ENCODE measurements at regions of chr16 and their contacts with region 1.

Region 1: GRCh38 chr16:1705688-1706385 is at the start of gene MAPK8IP3:
- DNase-seq: peak; percentile 92
- H3K4me3 ChIP-seq: peak within 1 kb of the TSS; percentile 83
- H3K27ac ChIP-seq: peak within 1 kb of the TSS; percentile 57
- H3K4me1 ChIP-seq: peaks cover 30% of the 10 kb centered on the region
- CTCF ChIP-seq: peak; percentile 81
- total RNA-seq, gene MAPK8IP3: 95.9 and 114 TPM in 2 replicates

Region 2: DNA sequence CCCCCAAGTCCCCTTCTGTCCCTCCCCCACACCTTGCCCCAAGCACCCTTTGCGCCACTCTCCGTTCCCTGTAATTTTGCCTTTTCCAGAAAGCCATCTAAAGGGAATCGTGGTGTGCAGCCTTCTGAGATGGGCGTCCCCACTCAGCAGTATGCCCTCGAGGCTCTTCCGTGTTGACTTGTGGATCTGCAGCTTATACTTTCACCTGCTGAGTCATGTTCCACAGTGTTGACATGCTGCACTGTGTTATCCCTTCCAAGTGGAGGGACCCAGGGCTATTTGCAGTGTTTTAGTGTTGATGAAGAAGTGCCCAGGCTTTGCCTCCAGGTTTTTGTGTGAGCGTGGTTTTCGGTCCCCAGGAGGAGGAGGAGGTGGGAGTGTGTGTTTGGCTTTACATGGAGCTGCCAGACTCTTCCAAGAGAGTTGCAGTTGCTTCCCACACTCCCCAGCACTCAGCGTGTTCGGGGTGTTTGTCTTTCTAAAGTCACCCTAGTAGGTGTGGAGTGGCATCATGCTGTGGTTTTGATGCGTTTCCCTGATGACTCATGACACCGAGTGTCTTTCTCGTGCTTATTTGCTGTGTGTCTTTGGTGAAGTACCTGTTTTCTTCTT is 59.8 kb before region 1 on chr16:
- CTCF ChIA-PET with region 1: no interaction called
- POLR2A ChIA-PET with region 1: no interaction called
- intact Hi-C with region 1: no loop called
- DNase-seq: no peak
- H3K4me3 ChIP-seq: no peak overlapping the region
- H3K27ac ChIP-seq: peak overlapping the region; percentile 75
- H3K4me1 ChIP-seq: peaks cover 19% of the 10 kb centered on the region
- CTCF ChIP-seq: no peak

Region 3: GRCh38 chr16:1667251-1667650 is 38.6 kb before region 1 on chr16:
- CTCF ChIA-PET with region 1: no interaction called
- POLR2A ChIA-PET with region 1: no interaction called
- intact Hi-C with region 1: no loop called
- DNase-seq: no peak
- H3K4me3 ChIP-seq: no peak overlapping the region
- H3K27ac ChIP-seq: no peak overlapping the region
- H3K4me1 ChIP-seq: no peaks in the 10 kb centered on the region
- CTCF ChIP-seq: no peak

Region 4: DNA sequence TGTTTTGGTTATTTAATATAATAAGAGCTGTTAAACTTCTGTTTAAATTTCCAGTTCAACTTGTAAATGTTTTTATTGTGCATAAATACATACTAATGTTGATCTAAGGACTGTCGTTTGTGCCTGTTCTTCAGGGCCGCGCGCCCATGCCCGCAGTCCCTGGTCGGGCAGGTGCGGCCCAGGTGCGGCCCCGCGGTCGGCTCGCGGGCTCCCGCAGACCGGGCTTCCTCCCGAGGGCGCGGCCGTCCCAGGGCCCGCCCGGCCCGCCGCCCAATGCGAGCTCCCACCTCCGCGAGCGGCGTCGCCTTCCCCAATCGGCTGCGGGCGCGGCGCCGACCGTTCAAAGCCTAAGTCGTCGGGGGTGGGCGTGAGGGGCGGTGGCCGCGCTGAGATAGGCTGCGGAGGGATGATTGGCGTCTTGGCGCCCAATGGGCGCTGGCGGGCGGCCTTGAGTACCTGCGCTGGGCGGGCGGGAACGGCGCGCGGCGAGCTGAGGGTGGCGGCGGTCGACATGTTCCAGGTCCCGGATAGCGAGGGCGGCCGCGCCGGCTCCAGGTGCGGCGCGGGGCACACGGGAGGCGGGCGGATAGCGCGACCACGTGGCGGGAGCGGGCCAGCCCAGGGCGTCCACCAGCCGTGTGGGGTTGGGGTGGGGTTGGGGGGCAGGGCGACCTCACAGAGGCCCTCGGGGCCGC is 27.9 kb before region 1 on chr16 and contains the start of gene JPT2:
- CTCF ChIA-PET with region 1: interaction called, 3 read pairs
- POLR2A ChIA-PET with region 1: interaction called, 12 read pairs
- intact Hi-C with region 1: loop called (anchors 1 kb)
- DNase-seq: peak; percentile 98
- H3K4me3 ChIP-seq: peak within 1 kb of the TSS; percentile 97
- H3K27ac ChIP-seq: peak within 1 kb of the TSS; percentile 57
- H3K4me1 ChIP-seq: peaks cover 22% of the 10 kb centered on the region
- CTCF ChIP-seq: no peak
- total RNA-seq, gene JPT2: 48.3 and 67.4 TPM in 2 replicates

Region 5: GRCh38 chr16:1772736-1773584 is 67.1 kb after region 1 on chr16 and contains the starts of genes EME2 and MRPS34:
- CTCF ChIA-PET with region 1: no interaction called
- POLR2A ChIA-PET with region 1: no interaction called
- intact Hi-C with region 1: loop called (anchors 2 kb)
- DNase-seq: peak; percentile 92
- H3K4me3 ChIP-seq: peak within 1 kb of the TSS; percentile 98
- H3K27ac ChIP-seq: peak within 1 kb of the TSS; percentile 89
- H3K4me1 ChIP-seq: peaks cover 23% of the 10 kb centered on the region
- CTCF ChIP-seq: peak; percentile 80
- total RNA-seq, gene EME2: 22.0 and 23.8 TPM in 2 replicates
- total RNA-seq, gene MRPS34: 170 and 190 TPM in 2 replicates

Region 6: GRCh38 chr16:1839554-1839953 is 133.7 kb after region 1 on chr16:
- CTCF ChIA-PET with region 1: no interaction called
- POLR2A ChIA-PET with region 1: no interaction called
- intact Hi-C with region 1: no loop called
- DNase-seq: no peak
- H3K4me3 ChIP-seq: no peak overlapping the region
- H3K27ac ChIP-seq: no peak overlapping the region
- H3K4me1 ChIP-seq: no peaks in the 10 kb centered on the region
- CTCF ChIP-seq: no peak

Measured in OCI-LY7 (cell line).